Psoas muscle (tissue), 8 donors: ENCODE measurements at regions of chr5 and their contacts with region 1.

Region 1: DNA sequence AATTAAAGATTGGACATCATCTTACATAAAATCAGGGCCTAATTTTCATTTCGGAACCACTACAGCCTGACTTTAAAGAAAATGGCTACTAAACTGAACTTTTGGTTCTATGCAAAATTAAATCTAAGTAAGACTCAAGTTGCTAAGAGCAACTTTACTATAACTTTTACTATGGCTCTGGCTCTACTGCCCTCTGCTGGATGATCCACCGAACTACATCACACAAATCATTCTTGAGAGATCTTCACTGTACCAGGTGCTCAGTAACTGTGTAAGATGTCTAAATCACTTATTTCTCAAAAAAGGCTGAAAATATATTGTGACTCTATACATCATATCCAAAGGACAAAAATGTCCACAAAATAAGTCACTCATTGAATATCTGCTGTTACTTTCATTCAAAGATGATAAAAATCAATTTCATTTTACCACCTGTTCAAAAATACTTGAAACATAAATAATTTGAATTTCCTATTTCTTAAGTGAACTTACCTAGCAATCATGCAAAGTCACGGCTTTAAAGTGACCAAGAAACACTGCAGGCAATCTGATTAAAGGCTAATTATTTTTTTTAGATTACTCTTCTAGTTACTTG is 13.5 kb downstream of the MOCS2 start:
- DNase-seq: peak in 1 of 2 donors; percentile 24
- ATAC-seq: peak in 3 of 4 donors; percentile 64 to 84 (median 76)
- H3K4me3 ChIP-seq: no peak overlapping the region
- H3K27ac ChIP-seq: no peak overlapping the region
- H3K4me1 ChIP-seq: no peaks in the 10 kb centered on the region
- H3K27me3 ChIP-seq: no peaks in the 10 kb centered on the region
- CTCF ChIP-seq: peak; percentile 89

Region 2: DNA sequence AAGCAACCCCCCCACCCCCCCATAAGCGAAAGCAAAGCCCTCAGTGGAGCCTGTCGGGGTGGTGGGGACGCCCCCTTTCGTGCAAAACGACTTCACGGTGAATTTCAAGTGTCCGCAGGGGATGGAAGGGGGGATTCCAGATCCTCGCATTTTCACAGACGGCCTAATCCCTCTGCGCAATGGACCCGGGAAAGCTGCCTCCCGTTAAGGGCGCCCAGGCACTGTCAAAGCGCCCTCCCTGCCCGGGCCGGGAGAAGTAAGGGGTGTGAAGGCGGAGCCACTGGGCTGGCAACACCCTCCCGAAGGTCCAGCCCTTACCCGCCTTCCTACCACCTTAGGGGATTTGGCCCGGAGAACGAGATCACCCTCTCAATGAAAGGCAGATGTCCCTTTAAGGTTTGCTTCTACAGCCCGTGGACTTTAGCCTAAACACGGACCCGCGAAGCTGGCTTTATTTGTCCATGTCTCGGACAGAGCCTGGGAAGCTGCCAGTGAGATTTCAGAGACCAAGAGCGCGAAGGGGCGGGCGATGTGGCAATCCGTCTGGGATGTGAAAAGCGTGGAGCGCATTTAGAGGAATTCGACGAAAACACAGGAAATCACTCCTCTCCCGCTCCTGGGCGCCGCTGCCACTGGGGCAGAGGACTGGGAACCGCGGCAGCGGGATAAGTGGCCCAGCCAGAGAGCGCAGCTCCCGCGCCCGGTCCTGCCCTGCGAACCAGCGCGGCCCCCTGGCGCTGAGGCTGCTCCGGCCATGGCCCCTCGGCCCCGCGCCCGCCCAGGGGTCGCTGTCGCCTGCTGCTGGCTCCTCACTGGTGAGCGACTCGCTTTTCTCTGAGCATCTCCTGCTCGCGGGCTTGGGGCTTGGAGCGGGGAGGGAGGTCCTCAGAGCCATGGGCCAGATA is 308.2 kb before region 1 on chr5 and contains the starts of genes ITGA1 and PELO:
- intact Hi-C with region 1: loop called (anchors 10 kb)
- DNase-seq: peak; percentile 79 to 82
- ATAC-seq: peak; percentile 71 to 91 (median 85)
- H3K4me3 ChIP-seq: peak within 1 kb of the TSS; percentile 79
- H3K27ac ChIP-seq: peak within 1 kb of the TSS; percentile 74
- H3K4me1 ChIP-seq: peaks cover 6% of the 10 kb centered on the region
- H3K27me3 ChIP-seq: no peaks in the 10 kb centered on the region
- CTCF ChIP-seq: peak; percentile 35
- total RNA-seq, gene ITGA1: 13.0 to 29.3 (median 17.4) TPM
- total RNA-seq, gene PELO: 24.8 to 30.1 (median 25.3) TPM

Region 3: DNA sequence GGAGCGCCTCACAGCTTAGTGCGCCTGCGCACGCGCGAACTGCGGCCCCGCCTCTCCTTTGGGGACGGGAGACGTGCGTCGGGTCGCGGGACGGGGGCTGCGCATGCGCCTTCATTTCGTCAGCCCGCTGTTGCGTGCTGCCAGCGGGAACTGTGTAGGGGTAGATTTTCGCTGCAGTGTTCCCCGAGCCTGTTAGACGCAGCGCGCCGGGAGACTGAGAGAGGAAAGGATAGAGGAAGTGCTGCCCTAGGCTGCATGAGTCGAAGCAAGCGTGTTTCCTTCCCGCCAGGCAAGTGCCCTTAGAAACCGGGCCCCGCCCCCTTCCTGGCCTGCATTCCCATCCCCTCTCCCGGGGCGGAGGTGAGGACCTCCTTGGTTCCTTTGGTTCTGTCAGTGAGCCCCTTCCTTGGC is 296.0 kb before region 1 on chr5:
- intact Hi-C with region 1: loop called in 1 of 2 experiments (anchors 10 kb)
- DNase-seq: peak; percentile 95 to 98
- ATAC-seq: peak; percentile 94 to 96 (median 96)
- H3K4me3 ChIP-seq: peak overlapping the region; percentile 83
- H3K27ac ChIP-seq: peak overlapping the region; percentile 94
- H3K4me1 ChIP-seq: peaks cover 38% of the 10 kb centered on the region
- H3K27me3 ChIP-seq: no peaks in the 10 kb centered on the region
- CTCF ChIP-seq: no peak

Region 4: DNA sequence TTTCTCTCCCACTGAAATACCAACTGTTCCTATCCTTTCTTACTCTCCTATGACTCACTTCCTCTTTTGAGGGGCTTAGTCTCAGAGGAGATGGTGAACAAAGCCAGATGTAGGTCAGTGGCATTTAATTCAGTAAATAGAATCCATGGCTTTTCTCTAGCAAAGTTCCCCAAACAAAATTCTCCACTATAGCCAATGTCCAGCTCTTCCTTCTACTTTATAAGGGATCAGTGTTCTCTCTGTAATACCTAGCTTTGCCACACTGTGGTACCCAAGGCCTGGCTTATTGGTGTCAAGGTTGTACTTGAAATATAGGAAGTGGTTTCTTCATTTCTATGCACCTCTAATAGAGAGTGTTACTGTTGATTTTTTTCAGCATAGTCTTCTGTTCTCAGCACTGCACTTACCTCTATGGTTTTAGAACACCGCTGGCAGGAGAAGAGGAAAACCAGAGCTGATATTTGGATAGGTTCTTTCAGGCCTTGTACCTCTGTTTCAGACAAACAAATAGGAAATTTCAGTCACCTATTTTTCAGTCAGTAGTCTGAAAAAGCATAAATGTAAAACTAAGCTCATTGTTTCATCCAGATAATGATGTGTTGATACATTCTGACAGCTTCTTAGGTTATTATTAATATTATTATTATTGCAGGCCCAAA is 147.5 kb before region 1 on chr5:
- intact Hi-C with region 1: loop called (anchors 2 to 5 kb)
- DNase-seq: peak in 1 of 2 donors; percentile 17
- ATAC-seq: peak; percentile 71 to 81 (median 78)
- H3K4me3 ChIP-seq: no peak overlapping the region
- H3K27ac ChIP-seq: no peak overlapping the region
- H3K4me1 ChIP-seq: no peaks in the 10 kb centered on the region
- H3K27me3 ChIP-seq: no peaks in the 10 kb centered on the region
- CTCF ChIP-seq: peak; percentile 71

Region 5: DNA sequence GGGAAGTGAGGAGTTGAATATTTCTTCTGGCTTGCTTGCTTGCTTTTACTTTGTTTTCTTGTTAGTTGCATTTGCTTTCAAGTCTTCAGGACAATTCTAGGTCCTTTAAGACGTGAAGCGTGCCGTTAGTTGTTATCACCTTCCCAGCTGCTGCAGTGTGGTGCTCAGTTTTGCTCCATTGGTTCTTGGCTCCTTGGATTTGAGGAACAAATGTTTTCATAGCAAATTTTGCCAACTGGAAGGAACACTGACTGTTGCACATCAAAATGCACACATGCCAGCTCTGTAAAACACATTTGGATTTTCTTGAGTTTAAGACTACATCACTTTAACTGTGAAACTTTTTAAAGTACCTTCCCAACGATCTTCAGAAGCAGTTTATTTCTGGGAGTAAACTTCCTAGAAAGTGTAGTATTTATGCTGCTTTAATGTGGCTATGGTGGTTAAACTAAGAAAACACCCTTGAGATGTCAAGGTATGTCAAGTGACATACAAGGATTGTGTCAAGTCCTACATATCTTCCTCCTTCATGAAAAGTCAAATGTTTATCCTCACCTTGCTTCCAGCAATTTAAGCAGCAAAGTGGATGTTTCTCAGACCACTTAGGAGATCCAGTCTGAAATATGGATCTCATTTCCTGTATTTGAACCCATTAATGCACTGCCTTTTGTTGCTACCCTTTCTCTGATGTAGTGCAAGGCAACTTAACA is 11.3 kb before region 1 on chr5:
- intact Hi-C with region 1: no loop called
- DNase-seq: no peak
- ATAC-seq: no peak
- H3K4me3 ChIP-seq: no peak overlapping the region
- H3K27ac ChIP-seq: no peak overlapping the region
- H3K4me1 ChIP-seq: no peaks in the 10 kb centered on the region
- H3K27me3 ChIP-seq: no peaks in the 10 kb centered on the region
- CTCF ChIP-seq: no peak

Region 6: DNA sequence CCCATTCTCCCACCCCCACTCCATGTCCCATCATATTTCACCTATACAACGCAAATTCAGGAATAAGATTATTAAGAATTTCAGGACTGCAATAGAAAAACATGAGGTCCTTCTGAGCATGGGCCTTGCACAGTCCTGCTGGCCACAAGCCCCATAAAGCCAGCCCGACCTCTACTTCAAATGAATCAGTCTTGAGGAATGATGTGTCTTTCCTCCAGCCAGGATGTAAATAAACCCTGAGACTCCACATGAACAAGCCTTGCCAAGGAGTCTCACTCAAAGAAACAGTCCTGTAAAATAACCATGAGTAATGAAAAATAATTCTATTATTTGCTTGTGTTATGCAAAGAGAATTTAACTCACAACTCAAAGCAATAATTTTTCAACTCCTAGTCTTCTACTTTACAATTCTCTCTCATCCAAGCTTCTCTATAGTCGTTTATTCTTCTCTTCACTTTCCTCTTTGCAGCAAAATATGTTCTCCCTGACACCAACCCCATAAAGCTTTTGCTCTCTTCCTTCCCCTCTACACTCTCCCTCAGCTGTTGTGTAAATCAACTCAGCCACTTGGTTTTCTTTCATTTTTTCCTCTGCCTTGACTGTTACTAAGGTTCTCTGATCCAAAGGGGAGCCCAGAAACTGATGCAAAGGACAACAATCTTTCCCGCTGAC is 153.6 kb after region 1 on chr5:
- intact Hi-C with region 1: no loop called
- DNase-seq: peak in 1 of 2 donors; percentile 13
- ATAC-seq: no peak
- H3K4me3 ChIP-seq: no peak overlapping the region
- H3K27ac ChIP-seq: no peak overlapping the region
- H3K4me1 ChIP-seq: no peaks in the 10 kb centered on the region
- H3K27me3 ChIP-seq: no peaks in the 10 kb centered on the region
- CTCF ChIP-seq: no peak